PC-9 (cell line): ENCODE measurements at regions of chr1 and their contacts with region 1.

Region 1: GRCh38 chr1:56516539-56517252 is 62.7 kb downstream of the PLPP3 start:
- DNase-seq: peak; percentile 59 to 96
- H3K4me3 ChIP-seq: peak overlapping the region; percentile 60
- H3K27ac ChIP-seq: peak overlapping the region; percentile 99
- H3K4me1 ChIP-seq: peaks cover 41% of the 10 kb centered on the region
- H3K27me3 ChIP-seq: no peaks in the 10 kb centered on the region
- CTCF ChIP-seq: no peak

Region 2: DNA sequence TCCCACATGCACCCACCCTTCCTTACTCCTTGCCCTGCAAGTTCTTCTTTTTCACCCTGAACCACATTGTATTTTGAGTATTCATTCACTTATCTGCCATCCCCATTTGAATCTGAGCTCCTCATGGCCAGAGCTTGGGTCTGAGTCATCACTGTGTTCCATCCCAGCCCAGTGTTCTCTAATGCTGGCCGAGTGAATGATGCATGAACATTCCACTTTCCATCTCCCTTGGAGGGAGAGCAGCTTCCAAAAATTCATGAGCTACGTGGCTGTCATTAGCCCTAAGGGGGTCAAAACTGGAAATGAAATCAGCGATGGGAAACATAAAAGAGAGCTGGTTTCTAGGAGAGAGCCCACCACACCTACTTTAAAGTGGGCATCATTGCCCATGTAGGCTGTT is 1114.6 kb before region 1 on chr1:
- CTCF ChIA-PET with region 1: no interaction called
- POLR2A ChIA-PET with region 1: interaction called, 11 read pairs
- intact Hi-C with region 1: no loop called
- DNase-seq: no peak
- H3K4me3 ChIP-seq: no peak overlapping the region
- H3K27ac ChIP-seq: no peak overlapping the region
- H3K4me1 ChIP-seq: no peaks in the 10 kb centered on the region
- H3K27me3 ChIP-seq: no peaks in the 10 kb centered on the region
- CTCF ChIP-seq: no peak

Region 3: GRCh38 chr1:56156971-56157876 is 359.5 kb before region 1 on chr1:
- CTCF ChIA-PET with region 1: no interaction called
- POLR2A ChIA-PET with region 1: no interaction called
- intact Hi-C with region 1: loop called (anchors 10 kb)
- DNase-seq: no peak
- H3K4me3 ChIP-seq: no peak overlapping the region
- H3K27ac ChIP-seq: no peak overlapping the region
- H3K4me1 ChIP-seq: peaks cover 9% of the 10 kb centered on the region; the same call in 1 of the 2 replicates
- H3K27me3 ChIP-seq: no peaks in the 10 kb centered on the region
- CTCF ChIP-seq: no peak

Region 4: DNA sequence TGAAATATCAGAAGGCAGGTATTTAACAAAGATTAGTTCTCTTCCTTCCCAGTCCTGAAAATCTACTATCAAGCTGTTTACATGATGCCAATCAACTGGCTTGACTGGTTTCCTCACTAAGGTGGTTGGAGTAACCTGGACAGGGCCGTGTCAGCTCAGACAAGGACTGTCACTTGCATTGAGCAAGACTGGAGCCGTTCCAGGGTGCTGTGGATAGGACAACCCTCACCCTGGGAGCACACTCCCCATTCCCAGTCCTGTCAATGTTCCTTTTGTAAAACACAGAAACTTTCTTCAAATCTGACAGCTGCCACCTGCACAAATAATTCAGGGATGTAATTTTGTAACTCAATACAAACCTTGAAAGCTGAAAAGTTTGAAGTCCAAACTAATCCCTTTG is 31.3 kb after region 1 on chr1:
- CTCF ChIA-PET with region 1: no interaction called
- POLR2A ChIA-PET with region 1: no interaction called
- intact Hi-C with region 1: loop called (anchors 1 kb)
- DNase-seq: peak; percentile 62 to 83
- H3K4me3 ChIP-seq: no peak overlapping the region
- H3K27ac ChIP-seq: peak overlapping the region; percentile 54
- H3K4me1 ChIP-seq: peaks cover 25% of the 10 kb centered on the region
- H3K27me3 ChIP-seq: no peaks in the 10 kb centered on the region
- CTCF ChIP-seq: no peak